Posterior vena cava (tissue), 2 donors: ENCODE measurements at regions of chr2 and their contacts with region 1.

Region 1: GRCh38 chr2:170815746-170816503 is 762 bp upstream of the GAD1 start:
- DNase-seq: no peak

Region 2: DNA sequence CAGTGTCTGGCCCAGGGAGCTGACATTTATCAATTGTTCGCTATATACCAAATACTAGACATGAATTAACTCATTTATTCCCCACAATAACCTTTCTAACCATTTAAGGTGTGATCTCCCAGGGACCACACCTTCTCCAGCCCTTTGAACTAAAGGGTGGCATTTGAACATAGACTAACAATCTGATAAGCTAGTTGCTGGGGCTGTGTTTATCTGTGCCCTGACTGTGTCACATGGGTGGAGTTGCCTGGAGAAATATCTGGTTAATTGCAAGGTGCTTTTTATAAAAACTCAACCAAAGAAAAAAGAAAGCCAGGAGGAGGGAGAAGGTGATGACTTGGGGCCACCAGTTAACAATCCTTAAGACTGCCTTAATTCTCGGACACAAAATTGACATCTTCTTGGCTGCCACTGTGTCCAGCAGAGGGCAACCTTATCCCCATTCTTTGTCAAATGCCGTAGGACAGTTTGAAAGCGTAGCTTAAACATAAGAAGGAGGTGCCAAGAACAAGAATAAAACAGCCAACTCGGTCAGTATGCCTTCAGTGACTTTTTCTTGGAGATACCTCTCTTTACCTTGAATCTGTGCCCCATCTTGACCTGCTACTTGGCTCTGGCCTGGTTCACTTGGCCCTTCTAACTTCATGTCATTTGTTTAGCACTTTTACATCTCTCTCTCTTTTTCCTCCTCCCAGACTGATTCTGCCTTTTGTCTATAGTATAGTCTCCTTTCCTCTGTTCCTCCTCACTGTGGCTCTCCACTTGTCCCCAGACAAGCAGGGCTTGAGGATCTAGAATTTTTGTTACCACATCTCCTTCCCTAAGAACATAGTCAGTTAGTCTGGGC is 454.6 kb before region 1 on chr2:
- intact Hi-C with region 1: loop called in 1 of 2 experiments (anchors 10 kb)
- DNase-seq: no peak

Region 3: GRCh38 chr2:170369894-170370293 is 446.0 kb before region 1 on chr2:
- intact Hi-C with region 1: loop called (anchors 10 kb)
- DNase-seq: no peak

Region 4: GRCh38 chr2:170409164-170409535 is 406.8 kb before region 1 on chr2:
- intact Hi-C with region 1: loop called in 1 of 2 experiments (anchors 5 kb)
- DNase-seq: peak; percentile 87

Region 5: GRCh38 chr2:170486730-170487129 is 329.2 kb before region 1 on chr2:
- intact Hi-C with region 1: loop called in 1 of 2 experiments (anchors 10 kb)
- DNase-seq: no peak

Region 6: DNA sequence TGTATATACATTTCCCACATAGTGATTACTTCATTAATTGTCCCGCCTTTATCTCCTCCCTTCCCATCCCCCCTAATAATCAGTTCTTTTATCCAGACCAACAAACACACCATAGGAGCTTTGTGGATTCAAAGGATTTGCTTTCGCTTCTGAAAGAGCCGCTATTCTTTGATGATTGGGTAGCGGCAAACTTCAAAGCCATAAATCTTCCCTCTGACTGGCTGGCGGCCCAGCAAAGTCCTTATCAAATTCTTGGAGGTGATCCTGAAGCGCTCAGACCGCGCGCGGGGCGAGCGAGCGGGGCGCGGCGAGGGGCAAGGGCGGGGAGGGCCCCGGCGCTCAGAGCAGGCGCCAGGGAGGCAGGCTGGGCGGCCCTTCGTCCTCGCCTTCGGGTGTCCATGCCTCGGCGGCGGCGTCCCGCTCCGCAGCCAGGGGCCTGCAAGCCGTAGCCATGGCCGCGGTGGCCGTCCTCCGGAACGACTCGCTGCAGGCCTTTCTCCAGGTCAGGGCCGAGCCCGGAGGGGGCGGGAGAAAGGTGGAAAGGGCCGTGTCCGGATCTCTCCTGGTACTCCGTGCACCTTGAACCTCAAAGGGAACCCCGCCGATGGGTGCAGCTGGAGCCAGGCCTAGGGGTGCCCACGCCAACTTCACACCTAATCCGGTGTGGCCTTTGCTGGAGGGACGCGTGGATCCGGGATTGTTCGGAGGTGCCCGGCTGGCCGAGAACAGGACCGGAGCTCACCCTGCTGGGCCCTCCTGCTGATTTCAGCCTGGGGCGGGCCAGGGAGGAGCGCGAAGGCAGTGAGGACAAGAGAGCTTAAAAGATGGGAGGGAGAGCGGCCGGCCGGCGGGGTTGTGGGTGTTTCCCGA is 100.6 kb before region 1 on chr2 and contains the start of gene SP5:
- intact Hi-C with region 1: loop called in 1 of 2 experiments (anchors 10 kb)
- DNase-seq: peak; percentile 81
- total RNA-seq, gene SP5: 0.28 TPM in 1 of 2 donors, not detected in the other

Region 7: DNA sequence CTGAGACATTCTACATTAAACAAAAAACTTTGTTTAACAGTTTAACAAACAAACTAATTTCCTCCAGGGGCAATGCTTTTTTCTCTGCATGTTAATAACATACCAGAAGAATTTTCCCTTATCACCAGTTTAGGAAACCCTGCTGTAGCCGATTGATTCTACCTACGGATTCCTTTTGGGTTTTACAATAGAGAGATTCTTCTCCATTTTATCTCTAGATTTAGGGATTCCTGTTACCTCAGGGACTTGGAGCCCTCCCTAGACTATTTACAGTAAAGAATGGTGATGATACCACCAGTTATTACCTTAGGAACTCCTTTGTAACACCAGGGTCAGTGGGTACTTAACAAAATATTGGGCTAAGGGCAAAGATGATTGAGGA is 51.1 kb before region 1 on chr2:
- intact Hi-C with region 1: no loop called
- DNase-seq: no peak